Sciatic nerve (tissue), 2 donors: ENCODE measurements at regions of chr22 and their contacts with region 1.

Region 1: GRCh38 chr22:27810609-27811151 is 9.1 kb upstream of the MN1 start:
- DNase-seq: no peak
- ATAC-seq: peak; percentile 94

Region 2: DNA sequence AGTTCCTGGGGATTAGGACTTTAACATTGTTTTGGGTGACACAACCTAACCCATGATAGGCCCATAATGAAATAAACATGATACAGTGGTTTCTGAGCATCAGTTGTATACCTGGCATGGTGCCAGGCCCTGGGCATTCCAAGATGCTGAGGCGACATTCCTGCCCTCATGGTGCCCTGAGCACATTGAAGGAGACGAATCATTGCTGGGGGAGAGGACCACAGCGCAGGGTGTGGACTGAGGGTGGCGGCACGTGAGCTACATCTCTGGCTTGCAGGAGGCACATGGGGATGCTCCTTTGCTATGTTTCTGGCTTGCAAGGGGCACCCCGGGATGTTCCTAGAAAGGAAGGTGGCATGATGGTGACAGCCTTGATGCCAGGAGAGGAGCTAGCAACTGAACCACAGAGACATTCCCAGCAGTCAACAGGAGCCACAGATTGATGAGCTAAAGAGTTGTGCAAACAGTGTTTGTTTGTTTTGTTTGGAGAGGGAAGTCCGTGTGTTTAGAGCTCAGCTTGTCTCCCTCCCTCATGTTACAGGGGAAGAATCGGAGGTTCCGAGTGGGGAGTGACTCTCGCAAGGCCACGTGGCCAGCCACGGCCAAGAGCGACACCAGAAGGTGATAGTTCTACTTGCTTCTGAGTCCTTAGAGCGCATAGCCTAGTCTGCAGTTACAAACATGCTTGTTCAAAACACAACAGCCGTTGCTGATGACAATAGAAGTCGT is 1046.9 kb before region 1 on chr22:
- intact Hi-C with region 1: loop called (anchors 10 kb)
- DNase-seq: no peak
- ATAC-seq: peak; percentile 91